CD8-positive, alpha-beta T cell (primary cell): ENCODE measurements at regions of chr22 and their contacts with region 1.

Region 1: DNA sequence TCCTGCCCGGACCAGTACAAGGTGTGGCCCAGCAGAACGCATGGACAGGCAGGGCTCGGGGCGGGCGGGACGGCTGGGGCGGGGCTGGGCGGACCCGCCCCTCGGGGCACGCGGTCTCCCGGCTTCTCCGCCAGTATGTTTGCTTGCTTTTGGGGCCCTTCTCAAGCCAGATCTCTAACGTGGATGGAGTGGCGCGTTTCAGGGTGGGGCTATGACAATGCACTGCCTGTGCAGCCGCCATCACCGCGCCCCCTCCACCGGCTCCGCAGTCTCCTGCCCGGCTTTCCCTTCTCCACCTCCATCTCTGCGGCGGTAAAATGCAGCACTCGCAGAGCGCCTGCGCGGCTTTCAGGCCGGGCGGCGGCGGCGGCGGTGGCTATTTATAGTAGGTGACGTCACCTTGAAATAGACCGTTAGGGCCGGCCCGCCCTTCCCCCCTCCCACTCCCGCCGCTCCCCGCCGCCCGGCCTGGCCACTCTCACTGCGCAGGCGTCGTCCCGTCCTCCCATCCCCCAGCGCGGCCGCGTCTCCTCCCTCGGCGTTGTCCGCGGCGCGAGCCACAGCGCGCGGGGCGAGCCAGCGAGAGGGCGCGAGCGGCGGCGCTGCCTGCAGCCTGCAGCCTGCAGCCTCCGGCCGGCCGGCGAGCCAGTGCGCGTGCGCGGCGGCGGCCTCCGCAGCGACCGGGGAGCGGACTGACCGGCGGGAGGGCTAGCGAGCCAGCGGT is at the start of gene YWHAH:
- DNase-seq: peak; percentile 71 to 91 (median 84)
- ATAC-seq: peak; percentile 65
- H3K4me3 ChIP-seq: peak within 1 kb of the TSS; percentile 64 to 69
- H3K4me3 Mint-ChIP-seq: peak within 1 kb of the TSS; percentile 92
- H3K27ac ChIP-seq: peak within 1 kb of the TSS; percentile 62 to 85
- H3K27ac Mint-ChIP-seq: peak within 1 kb of the TSS; percentile 90
- H3K4me1 ChIP-seq: peaks cover 17% of the 10 kb centered on the region
- H3K4me1 Mint-ChIP-seq: peaks cover 12% of the 10 kb centered on the region
- H3K27me3 ChIP-seq: no peaks in the 10 kb centered on the region
- H3K27me3 Mint-ChIP-seq: no peaks in the 10 kb centered on the region
- CTCF ChIP-seq: no peak
- total RNA-seq, gene YWHAH: 22.4 to 24.3 TPM

Region 2: DNA sequence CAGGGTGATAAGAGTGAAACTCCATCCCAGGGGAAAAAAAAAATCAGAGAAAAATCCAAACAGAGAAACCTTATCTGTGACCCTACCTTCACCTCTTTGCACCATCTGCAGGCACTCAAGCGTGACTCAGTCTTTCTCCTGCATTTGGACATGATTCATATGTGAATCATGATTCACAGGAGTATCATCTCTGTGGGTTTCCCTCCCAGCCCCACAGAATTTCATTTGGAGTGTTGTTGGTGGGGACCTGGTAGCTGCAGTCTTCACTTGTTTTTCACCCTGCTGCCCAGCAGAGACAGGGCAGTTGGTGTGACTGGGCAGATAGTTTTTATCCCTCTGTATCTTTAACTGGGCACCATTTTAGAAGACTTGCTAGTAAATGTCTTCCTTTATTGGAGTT is 114.6 kb before region 1 on chr22:
- CTCF ChIA-PET with region 1: no interaction called
- POLR2A ChIA-PET with region 1: no interaction called
- intact Hi-C with region 1: loop called in 1 of 2 experiments (anchors 10 kb)
- DNase-seq: no peak
- ATAC-seq: no peak
- H3K4me3 ChIP-seq: no peak overlapping the region
- H3K4me3 Mint-ChIP-seq: no peak overlapping the region
- H3K27ac ChIP-seq: no peak overlapping the region
- H3K27ac Mint-ChIP-seq: no peak overlapping the region
- H3K4me1 ChIP-seq: no peaks in the 10 kb centered on the region
- H3K4me1 Mint-ChIP-seq: no peaks in the 10 kb centered on the region
- H3K27me3 ChIP-seq: no peaks in the 10 kb centered on the region
- H3K27me3 Mint-ChIP-seq: no peaks in the 10 kb centered on the region
- CTCF ChIP-seq: no peak

Region 3: DNA sequence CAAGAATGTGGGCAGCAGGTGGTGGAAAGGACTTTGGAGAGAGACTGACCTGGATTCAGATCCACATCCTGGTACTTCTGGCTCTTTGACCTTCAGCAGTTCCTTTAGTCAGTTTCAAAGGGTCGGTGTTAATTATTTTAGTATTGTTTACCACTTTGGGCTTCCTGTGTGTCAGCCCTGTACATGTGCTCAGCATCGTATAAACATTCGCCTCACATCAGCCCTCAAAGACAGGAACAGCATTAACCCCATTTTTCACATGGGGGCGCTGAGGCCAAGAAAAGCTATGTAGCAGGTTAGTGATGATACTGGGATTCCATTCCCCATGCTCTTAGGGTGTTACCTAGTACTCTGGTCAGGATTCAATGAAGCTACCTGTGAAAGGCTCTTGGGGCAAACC is 71.9 kb before region 1 on chr22:
- CTCF ChIA-PET with region 1: interaction called, 7 read pairs
- POLR2A ChIA-PET with region 1: no interaction called
- intact Hi-C with region 1: loop called (anchors 1 to 10 kb)
- DNase-seq: peak in 3 of 9 experiments; percentile 9 to 35 (median 31)
- ATAC-seq: no peak
- H3K4me3 ChIP-seq: no peak overlapping the region
- H3K4me3 Mint-ChIP-seq: no peak overlapping the region
- H3K27ac ChIP-seq: no peak overlapping the region
- H3K27ac Mint-ChIP-seq: no peak overlapping the region
- H3K4me1 ChIP-seq: no peaks in the 10 kb centered on the region
- H3K4me1 Mint-ChIP-seq: peaks cover 2% of the 10 kb centered on the region
- H3K27me3 ChIP-seq: no peaks in the 10 kb centered on the region
- H3K27me3 Mint-ChIP-seq: no peaks in the 10 kb centered on the region
- CTCF ChIP-seq: no peak

Region 4: DNA sequence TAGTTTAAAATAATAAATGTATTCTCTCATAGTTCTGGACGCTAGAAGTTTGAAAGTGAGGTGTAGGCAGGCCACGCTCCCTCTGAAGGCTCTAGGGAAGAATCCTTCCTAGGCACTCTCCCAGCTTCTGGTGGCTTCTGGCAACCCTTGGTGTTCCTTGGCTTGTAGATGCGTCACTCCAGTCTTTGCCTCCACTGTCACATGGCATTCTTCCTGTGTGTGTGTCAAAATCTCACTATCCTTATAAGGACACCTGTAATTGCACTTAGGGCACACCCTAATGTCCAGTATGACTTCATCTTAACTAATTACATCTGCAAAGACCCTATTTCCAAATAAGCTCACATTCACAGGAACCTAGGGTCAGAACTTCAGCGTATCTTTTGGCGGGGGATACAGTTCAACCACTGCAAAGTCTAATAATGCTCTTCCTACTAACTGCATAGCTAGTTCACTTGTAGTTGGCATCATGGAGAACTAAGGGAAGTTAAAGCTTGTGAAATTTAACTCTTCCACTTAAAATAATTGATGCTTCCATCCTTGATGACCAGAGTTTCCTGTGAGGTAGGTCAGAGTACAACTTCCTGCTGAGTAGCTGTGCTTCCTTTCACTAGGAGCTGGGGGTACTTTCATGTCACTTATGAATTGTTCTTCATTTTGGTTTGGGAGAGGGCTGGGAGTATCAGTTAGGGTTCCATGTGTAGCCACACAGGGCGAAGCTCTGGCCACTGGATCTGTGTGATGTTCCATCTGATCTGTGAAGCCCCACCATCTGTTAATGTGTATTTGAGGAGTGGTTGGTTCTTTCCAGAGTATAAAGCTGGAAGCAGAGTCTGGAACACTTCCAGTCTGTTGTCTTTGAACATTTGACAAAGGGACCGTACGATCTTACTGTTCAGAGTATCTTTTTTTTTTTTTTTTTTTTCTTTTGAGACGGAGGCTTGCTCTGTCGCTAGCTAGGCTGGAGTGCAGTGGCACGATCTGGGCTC is 10.7 kb after region 1 on chr22:
- CTCF ChIA-PET with region 1: interaction called, 26 read pairs
- POLR2A ChIA-PET with region 1: interaction called, 7 read pairs
- intact Hi-C with region 1: no loop called
- DNase-seq: no peak
- ATAC-seq: no peak
- H3K4me3 ChIP-seq: no peak overlapping the region
- H3K4me3 Mint-ChIP-seq: no peak overlapping the region
- H3K27ac ChIP-seq: peak overlapping the region in 1 of 2 experiments; percentile 47
- H3K27ac Mint-ChIP-seq: peak overlapping the region; percentile 65
- H3K4me1 ChIP-seq: peaks cover 34% of the 10 kb centered on the region
- H3K4me1 Mint-ChIP-seq: peaks cover 75% of the 10 kb centered on the region
- H3K27me3 ChIP-seq: no peaks in the 10 kb centered on the region
- H3K27me3 Mint-ChIP-seq: no peaks in the 10 kb centered on the region
- CTCF ChIP-seq: no peak

Region 5: GRCh38 chr22:32286290-32286840 is 342.2 kb after region 1 on chr22:
- CTCF ChIA-PET with region 1: no interaction called
- POLR2A ChIA-PET with region 1: no interaction called
- intact Hi-C with region 1: no loop called
- DNase-seq: no peak
- ATAC-seq: no peak
- H3K4me3 ChIP-seq: no peak overlapping the region
- H3K4me3 Mint-ChIP-seq: no peak overlapping the region
- H3K27ac ChIP-seq: no peak overlapping the region
- H3K27ac Mint-ChIP-seq: no peak overlapping the region
- H3K4me1 ChIP-seq: no peaks in the 10 kb centered on the region
- H3K4me1 Mint-ChIP-seq: no peaks in the 10 kb centered on the region
- H3K27me3 ChIP-seq: no peaks in the 10 kb centered on the region
- H3K27me3 Mint-ChIP-seq: peaks cover 20% of the 10 kb centered on the region
- CTCF ChIP-seq: no peak